ENCODE measurements at regions of chr12 and their contacts with region 1.

Region 1: DNA sequence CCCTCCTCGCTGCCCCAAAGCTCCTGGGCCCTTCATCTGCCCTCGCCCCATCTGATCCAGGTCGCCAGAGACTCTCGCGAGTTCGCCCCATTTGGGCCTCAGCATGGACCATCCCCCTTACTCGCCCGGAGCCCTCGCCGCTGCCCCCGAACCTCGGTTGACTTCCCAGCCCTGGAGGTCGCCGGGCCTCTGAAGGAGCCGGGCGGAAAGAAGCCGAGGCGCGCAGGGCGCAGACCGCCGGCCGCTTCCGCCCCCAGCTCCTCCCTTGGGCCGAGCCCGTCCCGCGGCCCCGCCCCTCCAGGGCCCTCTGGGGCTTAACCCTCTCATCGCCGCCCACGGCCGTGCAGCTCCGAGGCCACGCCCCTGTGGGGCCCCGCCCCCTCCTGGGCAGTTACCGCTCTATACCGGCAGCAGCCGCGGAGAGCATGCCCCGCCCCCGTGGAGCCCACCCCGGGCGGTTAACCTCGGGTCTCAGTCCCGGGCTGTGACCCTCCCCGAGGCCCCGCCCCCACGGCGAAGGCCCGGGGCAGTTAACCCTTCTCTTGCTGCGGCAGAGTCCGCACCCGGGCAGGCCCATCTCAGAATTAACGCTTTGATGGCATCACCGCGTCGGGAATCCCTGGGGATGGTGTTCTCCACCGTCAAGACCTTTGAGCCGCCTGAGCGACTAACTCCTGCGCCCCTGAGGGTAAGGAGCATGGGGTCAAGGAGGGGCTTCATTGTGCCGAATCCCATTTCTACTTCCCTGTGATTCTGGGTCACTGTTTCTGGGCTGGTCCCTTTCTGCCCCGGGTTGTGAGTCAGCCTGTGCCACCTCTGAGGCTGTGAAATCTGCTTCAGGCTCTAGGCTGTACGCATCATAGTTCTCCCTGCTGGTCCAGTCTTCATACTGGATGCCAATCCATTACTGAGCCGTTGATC is at the start of gene SPSB2:
- DNase-seq: peak; percentile 97 to 98 (median 98)
- H3K4me3 ChIP-seq: peak within 1 kb of the TSS; percentile 93 to 99
- H3K4me3 Mint-ChIP-seq: peak within 1 kb of the TSS; percentile 90 to 93 (median 92)
- H3K27ac ChIP-seq: peak within 1 kb of the TSS; percentile 87
- H3K27ac Mint-ChIP-seq: peak within 1 kb of the TSS; percentile 90 to 96 (median 93)
- H3K4me1 ChIP-seq: peaks cover 45% of the 10 kb centered on the region
- H3K4me1 Mint-ChIP-seq: peaks cover 32 to 66% (median 49%) of the 10 kb centered on the region in 4 donors
- H3K27me3 ChIP-seq: no peaks in the 10 kb centered on the region
- H3K27me3 Mint-ChIP-seq: no peaks in the 10 kb centered on the region
- total RNA-seq, gene SPSB2: 19.8 to 21.9 TPM

Region 2: DNA sequence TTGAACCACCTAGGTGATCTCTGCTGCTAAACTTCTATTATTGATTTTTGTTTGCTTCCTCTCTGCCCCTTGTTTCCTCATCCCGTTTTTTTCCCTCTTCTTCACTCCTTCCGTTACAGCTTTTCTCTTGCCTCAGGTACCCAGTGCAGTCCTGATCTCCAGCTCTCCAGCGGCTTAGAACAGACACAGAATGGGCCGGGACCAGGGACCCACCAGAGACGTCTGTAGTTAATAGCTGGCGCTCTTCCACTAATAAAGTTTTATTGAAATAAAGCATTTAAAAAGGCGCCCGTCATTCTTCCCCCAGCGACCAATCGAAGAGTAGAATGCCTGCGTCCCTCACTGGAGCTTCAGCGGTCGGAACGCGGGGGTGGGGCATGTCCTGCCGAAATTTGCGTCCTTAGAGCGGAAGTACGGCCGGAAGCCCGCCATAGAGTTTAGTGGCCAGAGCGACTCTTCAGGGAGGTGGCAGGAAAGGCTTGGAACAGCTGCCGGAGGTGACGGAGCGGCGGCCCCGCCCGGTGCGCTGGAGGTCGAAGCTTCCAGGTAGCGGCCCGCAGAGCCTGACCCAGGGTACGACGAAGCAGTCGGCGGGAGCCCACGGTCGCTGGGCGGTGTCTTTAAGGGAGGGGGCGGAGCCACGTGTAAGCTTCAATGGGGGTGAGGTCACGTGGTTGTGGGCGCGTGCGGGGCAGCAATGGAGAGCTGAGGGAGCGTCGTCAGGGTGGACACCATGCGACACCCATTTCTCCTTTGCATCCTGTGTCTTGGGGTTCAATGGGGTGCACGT is 149.6 kb before region 1 on chr12 and contains the start of gene COPS7A:
- CTCF ChIA-PET with region 1: interaction called, 3 read pairs
- POLR2A ChIA-PET with region 1: interaction called, 13 read pairs
- intact Hi-C with region 1: no loop called
- DNase-seq: peak; percentile 93 to 97 (median 96)
- H3K4me3 ChIP-seq: peak within 1 kb of the TSS; percentile 40 to 64
- H3K4me3 Mint-ChIP-seq: peak within 1 kb of the TSS; percentile 88 to 98 (median 94)
- H3K27ac ChIP-seq: peak within 1 kb of the TSS; percentile 68
- H3K27ac Mint-ChIP-seq: peak within 1 kb of the TSS; percentile 92 to 99 (median 98)
- H3K4me1 ChIP-seq: peaks cover 21% of the 10 kb centered on the region
- H3K4me1 Mint-ChIP-seq: peaks cover 15 to 31% (median 22%) of the 10 kb centered on the region in 4 donors
- H3K27me3 ChIP-seq: no peaks in the 10 kb centered on the region
- H3K27me3 Mint-ChIP-seq: no peaks in the 10 kb centered on the region
- total RNA-seq, gene COPS7A: 36.9 to 37.7 TPM

Region 3: DNA sequence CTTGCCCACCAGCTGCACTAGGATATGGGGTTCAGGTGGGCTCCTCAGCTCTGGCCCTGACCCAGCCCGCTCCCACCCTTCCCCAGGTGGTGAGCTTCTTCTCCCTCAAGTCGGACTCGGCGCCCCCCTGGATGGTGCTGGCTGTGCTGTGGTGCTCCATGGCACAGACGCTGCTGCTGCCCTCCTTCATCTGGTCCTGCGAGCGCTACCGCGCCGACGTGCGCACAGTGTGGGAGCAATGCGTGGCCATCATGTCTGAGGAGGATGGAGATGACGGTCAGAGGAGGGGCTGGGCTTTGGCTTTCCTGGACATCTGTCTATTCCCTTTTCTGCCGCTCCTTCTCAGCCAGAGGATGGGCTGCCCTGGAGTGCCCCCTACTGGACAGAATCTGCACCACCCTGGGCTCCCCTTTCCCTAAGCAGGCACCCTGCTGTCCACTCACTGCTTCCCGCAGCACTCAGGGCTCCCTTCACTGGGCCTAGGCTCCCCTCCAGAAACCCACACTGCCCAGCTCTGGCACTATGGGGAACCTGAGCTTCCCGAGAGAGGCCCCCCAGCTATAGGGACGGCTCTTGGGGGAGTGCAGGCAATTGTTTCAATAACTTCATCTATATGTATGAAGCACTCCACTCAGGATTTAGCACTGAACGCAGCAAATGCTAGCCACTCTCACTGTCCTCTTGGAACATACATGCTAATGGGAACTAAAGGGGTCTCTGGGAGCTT is 47.8 kb before region 1 on chr12:
- CTCF ChIA-PET with region 1: interaction called, 3 read pairs
- POLR2A ChIA-PET with region 1: interaction called, 10 read pairs
- intact Hi-C with region 1: no loop called
- DNase-seq: peak; percentile 73 to 82 (median 78)
- H3K4me3 ChIP-seq: no peak overlapping the region
- H3K4me3 Mint-ChIP-seq: peak overlapping the region in 1 of 8 donors; percentile 57
- H3K27ac ChIP-seq: no peak overlapping the region
- H3K27ac Mint-ChIP-seq: peak overlapping the region in 4 of 7 donors; percentile 24 to 71 (median 34)
- H3K4me1 ChIP-seq: peaks cover 36% of the 10 kb centered on the region
- H3K4me1 Mint-ChIP-seq: peaks cover 17 to 60% (median 28%) of the 10 kb centered on the region in 4 donors
- H3K27me3 ChIP-seq: peaks cover 10% of the 10 kb centered on the region
- H3K27me3 Mint-ChIP-seq: peaks cover 6 to 24% of the 10 kb centered on the region in 2 donors

Region 4: DNA sequence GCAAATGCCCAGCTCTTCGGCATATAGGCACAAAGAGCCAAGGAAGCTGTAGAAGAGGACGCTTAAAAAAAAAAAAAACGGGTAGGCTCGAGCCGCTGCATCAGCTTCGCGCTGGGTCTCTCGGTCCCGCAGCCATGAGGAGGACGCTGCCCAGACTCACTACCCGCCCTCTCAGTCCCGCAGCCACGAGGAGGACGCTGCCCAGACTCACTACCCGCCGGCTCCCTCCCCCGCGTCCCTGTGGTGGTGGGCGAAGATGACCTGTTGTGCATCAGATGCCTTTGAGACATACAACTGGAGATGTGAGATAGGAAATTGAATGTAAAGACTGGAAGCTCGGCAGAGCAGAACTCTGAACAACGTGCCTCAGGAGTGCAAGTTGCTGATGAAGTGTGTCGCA is 11.2 kb after region 1 on chr12:
- CTCF ChIA-PET with region 1: interaction called, 26 read pairs
- POLR2A ChIA-PET with region 1: interaction called, 133 read pairs
- intact Hi-C with region 1: no loop called
- DNase-seq: no peak
- H3K4me3 ChIP-seq: no peak overlapping the region
- H3K4me3 Mint-ChIP-seq: no peak overlapping the region
- H3K27ac ChIP-seq: no peak overlapping the region
- H3K27ac Mint-ChIP-seq: no peak overlapping the region
- H3K4me1 ChIP-seq: no peaks in the 10 kb centered on the region
- H3K4me1 Mint-ChIP-seq: no peaks in the 10 kb centered on the region
- H3K27me3 ChIP-seq: no peaks in the 10 kb centered on the region
- H3K27me3 Mint-ChIP-seq: no peaks in the 10 kb centered on the region

Region 5: DNA sequence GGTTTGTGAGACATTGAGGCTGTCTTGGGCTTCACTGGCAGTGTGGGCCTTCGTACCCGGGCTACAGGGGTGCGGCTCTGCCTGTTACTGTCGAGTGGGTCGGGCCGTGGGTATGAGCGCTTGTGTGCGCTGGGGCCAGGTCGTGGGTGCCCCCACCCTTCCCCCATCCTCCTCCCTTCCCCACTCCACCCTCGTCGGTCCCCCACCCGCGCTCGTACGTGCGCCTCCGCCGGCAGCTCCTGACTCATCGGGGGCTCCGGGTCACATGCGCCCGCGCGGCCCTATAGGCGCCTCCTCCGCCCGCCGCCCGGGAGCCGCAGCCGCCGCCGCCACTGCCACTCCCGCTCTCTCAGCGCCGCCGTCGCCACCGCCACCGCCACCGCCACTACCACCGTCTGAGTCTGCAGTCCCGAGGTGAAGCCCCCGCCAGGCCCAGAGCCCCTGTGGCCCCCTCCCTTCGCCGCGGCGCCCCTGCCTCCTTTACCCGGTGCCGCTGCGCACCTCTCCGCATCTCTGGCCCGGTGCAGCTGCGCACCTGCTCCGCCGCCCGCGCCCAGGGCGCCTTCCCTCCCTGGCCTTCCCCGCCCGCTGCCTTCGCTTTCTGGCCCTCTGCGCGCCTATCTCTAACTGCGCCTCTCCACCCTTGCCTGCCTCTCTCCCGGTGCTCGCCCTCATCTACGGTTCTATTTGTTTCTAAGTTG is 41.0 kb after region 1 on chr12 and contains the start of gene ENO2:
- CTCF ChIA-PET with region 1: interaction called, 4 read pairs
- POLR2A ChIA-PET with region 1: interaction called, 29 read pairs
- intact Hi-C with region 1: loop called (anchors 1 kb)
- DNase-seq: peak; percentile 83 to 93 (median 85)
- H3K4me3 ChIP-seq: peak within 1 kb of the TSS; percentile 69 to 76
- H3K4me3 Mint-ChIP-seq: peak within 1 kb of the TSS; percentile 90 to 98 (median 96)
- H3K27ac ChIP-seq: peak within 1 kb of the TSS; percentile 77
- H3K27ac Mint-ChIP-seq: peak within 1 kb of the TSS; percentile 88 to 98 (median 96)
- H3K4me1 ChIP-seq: peaks cover 29% of the 10 kb centered on the region
- H3K4me1 Mint-ChIP-seq: peaks cover 12 to 44% (median 27%) of the 10 kb centered on the region in 4 donors
- H3K27me3 ChIP-seq: no peaks in the 10 kb centered on the region
- H3K27me3 Mint-ChIP-seq: no peaks in the 10 kb centered on the region
- total RNA-seq, gene ENO2: 187 to 190 TPM

Region 6: GRCh38 chr12:6944381-6945186 is 71.2 kb after region 1 on chr12:
- CTCF ChIA-PET with region 1: interaction called, 54 read pairs
- POLR2A ChIA-PET with region 1: interaction called, 70 read pairs
- intact Hi-C with region 1: loop called (anchors 1 kb)
- DNase-seq: peak; percentile 84 to 90 (median 85)
- H3K4me3 ChIP-seq: peak overlapping the region; percentile 87 to 90
- H3K4me3 Mint-ChIP-seq: peak overlapping the region; percentile 91 to 99 (median 98)
- H3K27ac ChIP-seq: peak overlapping the region; percentile 91
- H3K27ac Mint-ChIP-seq: peak overlapping the region; percentile 95 to 100 (median 98)
- H3K4me1 ChIP-seq: peaks cover 66% of the 10 kb centered on the region
- H3K4me1 Mint-ChIP-seq: peaks cover 37 to 74% (median 60%) of the 10 kb centered on the region in 4 donors
- H3K27me3 ChIP-seq: no peaks in the 10 kb centered on the region
- H3K27me3 Mint-ChIP-seq: no peaks in the 10 kb centered on the region

Region 7: DNA sequence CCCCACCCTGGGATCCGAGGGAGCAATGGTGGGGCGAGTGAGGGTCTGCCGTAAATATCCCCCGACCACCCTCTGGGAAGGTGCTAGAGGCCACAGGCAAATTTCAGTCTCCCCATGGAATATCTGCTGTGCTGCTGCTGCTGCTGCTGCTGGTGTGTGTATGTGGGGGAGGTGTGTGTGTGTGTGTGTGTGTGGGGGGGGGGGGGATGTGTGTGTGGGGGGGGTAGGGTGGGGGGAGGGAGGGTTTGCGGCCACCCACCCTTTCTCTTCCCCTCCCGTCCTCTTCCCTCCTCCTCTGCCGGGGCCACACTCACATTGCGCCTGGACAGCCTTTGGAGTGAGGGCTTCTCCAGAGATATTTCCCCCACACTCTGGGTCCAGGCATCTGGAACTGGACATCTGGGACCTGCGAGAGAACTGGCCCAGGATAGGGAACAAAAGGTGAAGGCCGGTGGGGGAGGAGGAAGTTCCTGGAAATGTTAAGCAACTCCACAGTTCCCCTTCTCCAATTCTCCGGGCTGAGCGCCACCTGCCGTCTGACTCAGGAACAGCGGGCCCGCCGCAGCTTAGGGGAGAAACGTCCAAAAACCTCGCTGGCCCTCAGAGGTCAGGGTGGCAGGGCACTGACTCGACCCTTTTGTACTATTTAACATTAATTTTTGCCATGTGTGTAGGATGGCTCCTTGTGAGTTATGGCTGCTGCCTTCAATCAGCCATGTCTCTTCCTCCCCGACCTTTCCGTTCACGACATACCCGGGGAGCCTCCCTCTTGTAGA is 235.6 kb after region 1 on chr12 and contains the start of gene C1RL:
- CTCF ChIA-PET with region 1: interaction called, 130 read pairs
- POLR2A ChIA-PET with region 1: interaction called, 21 read pairs
- intact Hi-C with region 1: loop called (anchors 1 kb)
- DNase-seq: peak; percentile 63 to 73 (median 69)
- H3K4me3 ChIP-seq: peak within 1 kb of the TSS; percentile 54 to 94
- H3K4me3 Mint-ChIP-seq: peak within 1 kb of the TSS; percentile 93 to 96 (median 94)
- H3K27ac ChIP-seq: peak within 1 kb of the TSS; percentile 74
- H3K27ac Mint-ChIP-seq: peak within 1 kb of the TSS; percentile 91 to 97 (median 95)
- H3K4me1 ChIP-seq: peaks cover 38% of the 10 kb centered on the region
- H3K4me1 Mint-ChIP-seq: peaks cover 22 to 53% (median 40%) of the 10 kb centered on the region in 4 donors
- H3K27me3 ChIP-seq: no peaks in the 10 kb centered on the region
- H3K27me3 Mint-ChIP-seq: no peaks in the 10 kb centered on the region
- total RNA-seq, gene C1RL: 30.7 to 33.6 TPM